BJ (cell line): ENCODE measurements at regions of chr22 and their contacts with region 1.

Region 1: GRCh38 chr22:41479671-41480396 is 10.9 kb downstream of the ACO2 start:
- DNase-seq: no peak
- H3K4me3 ChIP-seq: no peak overlapping the region
- H3K27me3 ChIP-seq: no peaks in the 10 kb centered on the region
- CTCF ChIP-seq: 0 out of 2 replicates have a peak, but pooled peaks have one; percentile 4

Region 2: DNA sequence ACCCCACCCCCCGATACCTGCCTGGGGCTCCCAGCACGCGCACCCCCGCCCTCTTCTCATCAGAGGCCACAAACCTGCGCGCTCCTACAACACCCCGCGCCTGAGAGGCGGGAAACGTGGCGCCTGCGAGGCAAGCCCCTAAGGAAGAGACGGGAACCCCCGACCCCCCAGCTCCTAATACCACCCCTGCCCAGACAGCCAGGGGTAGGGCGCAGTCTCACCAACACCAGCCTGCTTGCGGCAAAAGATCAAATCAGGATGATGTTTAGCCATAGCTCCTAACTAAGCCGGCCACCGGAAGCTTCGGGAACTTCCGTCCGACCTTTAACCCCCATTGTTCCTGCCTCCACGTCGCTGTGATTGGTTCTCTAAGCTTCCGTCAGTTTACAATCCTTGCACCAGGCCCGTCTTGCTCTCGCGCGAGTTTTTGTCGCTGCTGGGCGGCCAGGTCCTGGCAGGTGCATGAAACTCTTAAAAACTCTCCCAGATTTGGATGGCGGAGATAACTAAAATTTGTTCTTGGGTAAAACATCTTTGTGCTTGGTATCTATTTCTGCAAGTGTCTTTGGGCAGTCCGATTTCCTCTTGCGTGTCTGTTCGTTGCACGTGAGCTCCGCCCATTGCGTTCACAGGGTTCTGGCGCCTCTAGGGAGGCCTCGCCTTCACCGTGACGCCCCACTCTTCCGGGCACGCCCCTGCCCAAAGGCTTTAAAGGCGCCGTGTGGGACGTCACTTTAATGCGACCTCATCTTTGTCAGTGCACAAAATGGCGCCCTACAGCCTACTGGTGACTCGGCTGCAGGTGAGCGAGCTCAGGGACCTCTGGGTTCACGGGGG is 11.2 kb before region 1 on chr22 and contains the starts of genes ACO2 and PHF5A:
- CTCF ChIA-PET with region 1: interaction called, 10 read pairs
- POLR2A ChIA-PET with region 1: no interaction called
- DNase-seq: peak; percentile 83
- H3K4me3 ChIP-seq: peak within 1 kb of the TSS; percentile 82
- H3K27me3 ChIP-seq: no peaks in the 10 kb centered on the region
- CTCF ChIP-seq: no peak
- polyA plus RNA-seq, gene ACO2: 20.5 and 60.5 TPM in 2 replicates
- polyA plus RNA-seq, gene PHF5A: 44.3 and 57.9 TPM in 2 replicates

Region 3: GRCh38 chr22:41603873-41604332 is 124.1 kb after region 1 on chr22:
- CTCF ChIA-PET with region 1: no interaction called
- POLR2A ChIA-PET with region 1: no interaction called
- DNase-seq: no peak
- H3K4me3 ChIP-seq: no peak overlapping the region
- H3K27me3 ChIP-seq: no peaks in the 10 kb centered on the region
- CTCF ChIP-seq: no peak

Region 4: GRCh38 chr22:41656556-41656955 is 176.7 kb after region 1 on chr22:
- CTCF ChIA-PET with region 1: no interaction called
- POLR2A ChIA-PET with region 1: no interaction called
- DNase-seq: no peak
- H3K4me3 ChIP-seq: no peak overlapping the region
- H3K27me3 ChIP-seq: no peaks in the 10 kb centered on the region
- CTCF ChIP-seq: no peak